Activated CD4-positive, alpha-beta T cell treated with anti-CD3 and anti-CD28 coated beads for 36 hours (primary cell): ENCODE measurements at regions of chr17 and their contacts with region 1.

Region 1: DNA sequence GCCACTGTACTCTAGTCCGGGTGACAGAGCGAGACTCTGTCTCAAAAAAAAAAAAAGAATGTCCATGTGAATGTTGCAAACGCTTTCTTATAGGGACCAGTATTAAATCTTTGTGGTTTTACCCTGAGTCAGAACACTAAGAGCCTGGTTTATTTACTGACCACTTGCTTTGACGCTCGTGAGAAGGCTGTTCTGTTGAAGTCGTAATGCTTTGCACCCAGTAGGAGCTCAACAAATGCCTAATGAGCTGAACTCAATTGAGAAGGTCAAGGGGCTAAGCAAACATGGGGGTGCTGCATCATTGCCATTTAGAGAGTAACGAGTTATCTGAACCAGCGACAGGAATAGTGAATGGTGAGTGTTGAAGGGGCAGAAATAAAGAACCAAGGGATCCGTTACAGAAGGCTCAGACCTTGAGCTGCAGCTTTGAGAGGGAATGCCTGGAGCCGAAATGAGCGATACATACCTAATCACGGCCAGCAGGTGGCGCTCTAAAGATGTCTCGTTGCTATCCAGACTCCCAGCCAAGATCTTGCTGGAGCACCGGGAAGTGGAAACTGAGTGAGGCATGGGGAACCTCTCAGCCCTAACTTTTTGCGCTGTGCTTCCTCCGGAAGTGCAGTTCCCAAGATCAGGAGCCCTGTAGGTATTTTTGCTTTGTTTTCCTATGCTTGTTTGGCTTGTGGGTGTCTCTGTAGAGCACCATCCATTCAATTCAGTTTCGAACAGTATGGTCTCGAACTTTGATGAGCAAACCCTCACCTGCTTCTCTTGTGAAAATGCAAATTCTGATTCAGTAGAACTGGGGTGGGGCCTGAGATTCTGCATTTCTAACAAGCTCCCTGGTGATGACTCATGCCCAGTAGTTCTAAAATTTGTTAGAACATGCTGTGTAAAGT is 12.6 kb upstream of the RNF222 start:
- DNase-seq: peak; percentile 90
- ATAC-seq: peak; percentile 81
- H3K4me3 Mint-ChIP-seq: no peak overlapping the region
- H3K27ac Mint-ChIP-seq: no peak overlapping the region
- H3K4me1 Mint-ChIP-seq: peaks cover 16% of the 10 kb centered on the region
- H3K27me3 Mint-ChIP-seq: peaks cover 5% of the 10 kb centered on the region

Region 2: DNA sequence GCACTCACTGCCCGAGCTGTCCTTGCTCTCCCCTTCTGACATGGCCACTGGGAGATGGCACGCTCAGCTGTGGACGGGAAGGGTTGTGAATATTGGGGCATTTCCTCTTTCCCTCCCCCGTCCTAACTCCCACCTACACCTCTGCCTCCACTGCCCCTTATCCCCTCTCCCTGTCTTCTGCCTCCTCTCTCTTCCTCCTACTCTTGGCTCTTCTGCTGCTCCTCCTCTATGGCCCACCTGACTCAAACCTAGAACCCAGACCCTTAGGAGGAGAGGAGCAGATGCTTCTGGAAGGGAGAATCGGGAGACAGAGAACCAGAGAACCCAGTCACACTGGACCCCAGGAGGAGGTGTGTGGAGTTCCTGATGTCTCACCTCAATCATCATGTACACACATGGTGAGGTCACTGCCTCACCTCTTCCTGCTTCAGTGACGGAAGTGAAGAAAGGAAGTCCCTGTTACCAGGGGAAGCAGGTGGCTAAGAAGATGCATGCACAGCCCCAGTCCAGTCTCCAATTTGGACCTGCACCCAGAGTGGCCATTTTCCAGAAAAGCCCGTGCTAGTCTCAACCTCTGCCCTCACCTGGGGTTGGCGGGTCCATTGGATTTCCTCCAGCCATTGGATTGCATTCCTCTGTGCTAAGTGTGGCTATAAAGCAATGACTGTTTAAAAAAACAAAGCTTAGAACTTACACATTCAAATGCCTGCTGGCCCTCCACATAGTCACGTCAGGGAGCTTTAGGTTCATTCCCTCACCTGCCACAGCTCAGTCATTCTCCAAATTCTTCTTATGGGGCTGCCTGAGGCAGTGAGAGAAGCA is 16.6 kb before region 1 on chr17:
- CTCF ChIA-PET with region 1: interaction called, 11 read pairs
- POLR2A ChIA-PET with region 1: no interaction called
- intact Hi-C with region 1: no loop called
- DNase-seq: peak; percentile 49
- ATAC-seq: peak; percentile 94
- H3K4me3 Mint-ChIP-seq: no peak overlapping the region
- H3K27ac Mint-ChIP-seq: peak overlapping the region; percentile 71
- H3K4me1 Mint-ChIP-seq: peaks cover 9% of the 10 kb centered on the region
- H3K27me3 Mint-ChIP-seq: peaks cover 9% of the 10 kb centered on the region

Region 3: GRCh38 chr17:8420041-8420934 is 10.1 kb after region 1 on chr17:
- CTCF ChIA-PET with region 1: interaction called, 21 read pairs
- POLR2A ChIA-PET with region 1: no interaction called
- intact Hi-C with region 1: no loop called
- DNase-seq: no peak
- ATAC-seq: no peak
- H3K4me3 Mint-ChIP-seq: no peak overlapping the region
- H3K27ac Mint-ChIP-seq: no peak overlapping the region
- H3K4me1 Mint-ChIP-seq: peaks cover 2% of the 10 kb centered on the region
- H3K27me3 Mint-ChIP-seq: peaks cover 22% of the 10 kb centered on the region

Region 4: GRCh38 chr17:8435245-8436168 is 25.3 kb after region 1 on chr17 and contains the start of gene NDEL1:
- CTCF ChIA-PET with region 1: interaction called, 11 read pairs
- POLR2A ChIA-PET with region 1: interaction called, 6 read pairs
- intact Hi-C with region 1: no loop called
- DNase-seq: peak; percentile 100
- ATAC-seq: peak; percentile 98
- H3K4me3 Mint-ChIP-seq: peak within 1 kb of the TSS; percentile 87
- H3K27ac Mint-ChIP-seq: peak within 1 kb of the TSS; percentile 91
- H3K4me1 Mint-ChIP-seq: peaks cover 29% of the 10 kb centered on the region
- H3K27me3 Mint-ChIP-seq: no peaks in the 10 kb centered on the region
- total RNA-seq, gene NDEL1: 51.9 to 58.6 TPM

Region 5: GRCh38 chr17:8745586-8746500 is 335.6 kb after region 1 on chr17:
- CTCF ChIA-PET with region 1: interaction called, 20 read pairs
- POLR2A ChIA-PET with region 1: no interaction called
- intact Hi-C with region 1: loop called (anchors 1 kb)
- DNase-seq: peak; percentile 87
- ATAC-seq: peak; percentile 83
- H3K4me3 Mint-ChIP-seq: peak overlapping the region; percentile 77
- H3K27ac Mint-ChIP-seq: peak overlapping the region; percentile 79
- H3K4me1 Mint-ChIP-seq: peaks cover 3% of the 10 kb centered on the region
- H3K27me3 Mint-ChIP-seq: no peaks in the 10 kb centered on the region

Region 6: GRCh38 chr17:8785547-8786413 is 375.6 kb after region 1 on chr17:
- CTCF ChIA-PET with region 1: interaction called, 15 read pairs
- POLR2A ChIA-PET with region 1: no interaction called
- intact Hi-C with region 1: loop called in 1 of 2 experiments (anchors 1 kb)
- DNase-seq: peak; percentile 79
- ATAC-seq: peak; percentile 61
- H3K4me3 Mint-ChIP-seq: no peak overlapping the region
- H3K27ac Mint-ChIP-seq: no peak overlapping the region
- H3K4me1 Mint-ChIP-seq: no peaks in the 10 kb centered on the region
- H3K27me3 Mint-ChIP-seq: peaks cover 6% of the 10 kb centered on the region

Region 7: GRCh38 chr17:8991514-8992285 is 581.5 kb after region 1 on chr17:
- CTCF ChIA-PET with region 1: no interaction called
- POLR2A ChIA-PET with region 1: no interaction called
- intact Hi-C with region 1: loop called in 1 of 2 experiments (anchors 10 kb)
- DNase-seq: peak; percentile 85
- ATAC-seq: peak; percentile 83
- H3K4me3 Mint-ChIP-seq: no peak overlapping the region
- H3K27ac Mint-ChIP-seq: no peak overlapping the region
- H3K4me1 Mint-ChIP-seq: peaks cover 6% of the 10 kb centered on the region
- H3K27me3 Mint-ChIP-seq: peaks cover 2% of the 10 kb centered on the region